HEK293T (cell line): ENCODE measurements at regions of chr2 and their contacts with region 1.

Region 1: DNA sequence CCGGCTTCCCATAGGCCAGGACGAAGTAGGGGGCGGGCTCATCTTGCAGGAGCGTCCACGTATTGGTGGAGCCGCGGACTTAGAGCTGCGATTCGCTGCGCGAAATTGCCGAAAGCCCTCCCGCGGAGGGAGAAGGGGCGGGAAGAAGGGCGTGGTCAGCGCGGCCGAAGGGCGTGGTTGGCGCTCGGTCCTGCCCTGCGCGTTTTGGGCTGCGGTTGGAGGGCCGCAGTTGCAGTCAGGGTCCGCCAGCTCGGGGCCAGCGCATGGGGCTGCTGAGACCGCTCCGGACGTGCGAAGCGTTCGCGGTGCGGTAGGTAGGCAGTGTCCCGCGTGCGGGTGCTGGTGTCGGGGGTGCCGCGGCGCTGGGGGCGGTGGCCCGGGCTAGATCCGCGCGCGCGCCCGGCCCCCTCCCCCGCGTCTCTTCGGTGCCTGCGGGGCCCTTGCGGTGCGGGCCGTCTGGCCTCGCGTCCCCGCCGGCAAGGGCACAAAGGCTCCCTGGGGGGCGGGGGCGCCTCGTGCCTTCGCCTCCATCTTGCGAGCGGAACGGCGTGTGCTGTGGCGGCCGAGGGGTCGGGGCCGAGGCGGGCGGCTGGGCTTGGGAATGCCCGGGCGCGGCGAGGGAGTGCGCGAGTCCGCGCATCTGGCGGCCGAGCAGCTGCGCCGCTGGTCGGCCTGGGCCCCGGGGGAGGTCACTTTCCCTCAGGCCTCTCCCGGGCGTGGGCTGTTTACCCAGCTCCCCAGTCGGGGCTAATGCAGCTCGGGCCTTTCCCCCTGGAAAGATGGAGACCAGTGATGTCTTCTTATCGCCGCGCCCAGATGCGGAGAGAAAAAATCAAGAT is at the start of gene CEP68:
- DNase-seq: peak; percentile 95

Region 2: GRCh38 chr2:65045651-65046050 is 10.8 kb before region 1 on chr2:
- CTCF ChIA-PET with region 1: no interaction called
- POLR2A ChIA-PET with region 1: interaction called, 17 read pairs
- DNase-seq: no peak

Region 3: GRCh38 chr2:65129826-65130663 is 73.6 kb after region 1 on chr2 and contains the start of gene RAB1A:
- CTCF ChIA-PET with region 1: interaction called, 3 read pairs
- POLR2A ChIA-PET with region 1: interaction called, 13 read pairs
- DNase-seq: peak; percentile 95

Region 4: DNA sequence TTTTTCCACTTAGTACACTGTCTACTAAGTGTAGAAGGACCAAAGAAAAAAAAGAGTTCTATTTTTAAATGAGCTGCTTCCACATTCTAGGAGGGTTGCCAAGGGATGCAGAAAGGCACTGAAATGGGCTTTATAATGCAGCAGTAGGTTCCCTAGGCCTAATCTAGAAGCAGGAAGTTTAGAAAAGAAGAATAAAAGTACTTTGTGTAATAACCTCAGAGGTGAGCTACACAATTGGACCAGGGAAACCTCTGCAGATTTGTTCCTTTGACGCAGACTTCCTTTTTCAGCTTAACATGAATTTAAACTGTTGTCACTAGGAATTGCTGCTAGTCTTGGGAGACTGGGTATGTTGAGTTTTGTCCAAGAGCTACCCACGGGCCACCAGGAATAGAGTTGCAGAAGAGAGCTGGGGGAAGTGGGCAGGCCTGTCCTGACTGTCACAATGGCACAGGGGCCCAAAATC is 108.0 kb after region 1 on chr2:
- CTCF ChIA-PET with region 1: no interaction called
- POLR2A ChIA-PET with region 1: no interaction called
- DNase-seq: no peak

Region 5: DNA sequence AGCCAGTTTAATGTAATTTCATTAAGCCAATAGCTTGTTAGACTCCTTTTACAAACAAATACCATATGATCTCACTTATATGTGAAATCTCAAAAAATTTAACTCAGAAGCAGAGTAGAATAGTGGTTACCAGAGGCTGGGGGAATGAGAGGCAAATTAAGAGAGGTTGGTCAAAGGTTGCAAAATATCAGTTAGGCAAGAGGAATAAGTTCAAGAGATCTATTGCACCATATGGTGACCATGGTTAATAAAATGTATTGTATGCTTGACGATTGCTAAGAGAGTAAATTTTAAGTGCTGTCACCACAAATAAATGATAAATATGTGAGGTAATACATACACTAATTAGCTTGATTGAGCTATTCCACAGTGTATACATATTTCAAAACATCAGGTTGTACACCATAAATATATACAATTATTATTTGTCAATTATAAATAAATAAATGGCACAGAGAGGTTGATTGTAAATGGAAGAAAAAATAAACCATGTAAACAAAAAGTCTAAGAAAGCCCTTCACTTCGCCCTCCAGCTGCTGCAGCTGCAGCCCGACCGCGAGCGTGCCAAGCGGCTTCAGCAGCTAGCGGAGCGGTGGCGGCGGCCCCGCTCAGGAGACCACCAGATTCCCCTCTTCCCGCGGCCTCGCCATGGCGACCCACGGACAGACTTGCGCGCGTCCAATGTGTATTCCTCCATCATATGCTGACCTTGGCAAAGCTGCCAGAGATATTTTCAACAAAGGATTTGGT is 148.2 kb after region 1 on chr2:
- CTCF ChIA-PET with region 1: no interaction called
- POLR2A ChIA-PET with region 1: no interaction called
- DNase-seq: no peak